Cardiac septum (tissue), 1 donor: ENCODE measurements at regions of chr3 and their contacts with region 1.

Region 1: GRCh38 chr3:16060358-16060852 is 114.1 kb upstream of the GALNT15 start:
- DNase-seq: no peak

Region 2: DNA sequence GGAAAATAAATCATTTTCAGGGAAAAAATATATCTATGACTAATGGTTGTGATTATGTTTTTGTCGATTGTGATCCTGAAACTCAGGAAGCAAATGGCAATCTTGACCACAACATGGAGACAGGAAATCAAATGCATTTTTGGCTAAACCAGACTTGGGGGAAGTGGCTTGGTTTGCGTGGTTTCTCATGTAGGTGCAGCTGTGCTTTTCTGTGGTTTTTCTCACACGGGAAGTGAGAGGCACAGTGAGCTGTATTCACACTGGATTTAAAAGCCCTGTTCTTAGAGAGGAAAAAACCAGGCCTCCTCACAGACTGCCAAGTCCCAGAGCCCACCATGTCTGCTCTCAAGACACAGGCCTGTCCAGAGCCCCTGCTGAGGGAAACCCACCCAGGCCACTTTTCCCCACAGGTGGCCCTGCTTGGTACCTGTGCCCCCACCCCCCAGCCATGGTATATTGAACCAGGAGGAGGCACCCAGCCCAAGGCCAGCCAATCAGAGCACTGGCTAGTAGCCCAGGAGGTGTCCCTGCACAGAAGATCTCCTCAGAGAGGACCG is 412.7 kb before region 1 on chr3:
- intact Hi-C with region 1: loop called (anchors 10 kb)
- DNase-seq: no peak

Region 3: GRCh38 chr3:16102905-16103364 is 42.5 kb after region 1 on chr3:
- intact Hi-C with region 1: loop called (anchors 5 kb)
- DNase-seq: no peak

Region 4: DNA sequence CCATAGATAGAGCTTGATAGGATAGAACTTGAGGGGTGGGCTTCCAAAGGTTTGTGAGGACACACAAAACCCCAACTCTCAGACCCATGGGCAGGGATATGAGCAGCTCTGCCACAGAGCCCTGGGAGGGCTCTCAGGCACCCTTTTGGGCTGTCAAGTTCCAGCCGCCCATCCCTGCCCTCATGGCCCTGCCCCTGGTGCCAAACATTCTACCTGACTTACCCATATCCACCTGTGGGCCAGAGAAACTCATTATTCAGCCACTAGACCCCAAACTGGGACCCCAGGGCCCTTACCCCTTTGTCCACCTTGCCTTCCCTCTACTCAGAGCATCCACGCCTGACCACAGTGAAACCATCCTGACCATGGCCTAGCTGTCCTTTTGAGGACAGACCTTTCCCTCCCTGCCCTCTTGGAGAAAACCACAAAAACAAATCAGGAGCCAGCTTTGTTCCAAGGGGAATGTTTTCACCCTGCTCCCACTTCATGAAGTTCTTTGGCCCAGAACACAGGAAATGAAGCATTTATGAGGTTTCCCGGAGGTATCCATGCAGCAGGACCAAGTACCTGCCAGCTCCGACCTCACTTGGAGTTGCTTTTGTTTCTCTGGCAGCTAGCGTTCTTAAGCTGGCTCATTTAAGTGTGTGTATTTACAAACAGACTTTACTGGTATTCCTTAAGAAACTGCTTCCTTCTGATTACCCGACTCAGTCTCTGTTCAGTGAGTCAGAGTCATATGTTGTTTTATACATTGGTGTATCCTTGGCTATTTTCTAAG is 79.9 kb after region 1 on chr3:
- intact Hi-C with region 1: loop called (anchors 5 kb)
- DNase-seq: no peak